WTC11 (cell line): ENCODE measurements at regions of chr11 and their contacts with region 1.

Region 1: GRCh38 chr11:65932558-65932919 is 12.7 kb upstream of the TSGA10IP start:
- DNase-seq: peak; percentile 37
- ATAC-seq: peak; percentile 75
- H3K4me3 Mint-ChIP-seq: peak overlapping the region; percentile 22; the same call in 1 of the 2 replicates
- H3K27ac Mint-ChIP-seq: no peak overlapping the region; the same call in 1 of the 2 replicates
- H3K4me1 Mint-ChIP-seq: peaks cover 21% of the 10 kb centered on the region
- H3K27me3 Mint-ChIP-seq: no peaks in the 10 kb centered on the region
- CTCF ChIP-seq: no peak

Region 2: DNA sequence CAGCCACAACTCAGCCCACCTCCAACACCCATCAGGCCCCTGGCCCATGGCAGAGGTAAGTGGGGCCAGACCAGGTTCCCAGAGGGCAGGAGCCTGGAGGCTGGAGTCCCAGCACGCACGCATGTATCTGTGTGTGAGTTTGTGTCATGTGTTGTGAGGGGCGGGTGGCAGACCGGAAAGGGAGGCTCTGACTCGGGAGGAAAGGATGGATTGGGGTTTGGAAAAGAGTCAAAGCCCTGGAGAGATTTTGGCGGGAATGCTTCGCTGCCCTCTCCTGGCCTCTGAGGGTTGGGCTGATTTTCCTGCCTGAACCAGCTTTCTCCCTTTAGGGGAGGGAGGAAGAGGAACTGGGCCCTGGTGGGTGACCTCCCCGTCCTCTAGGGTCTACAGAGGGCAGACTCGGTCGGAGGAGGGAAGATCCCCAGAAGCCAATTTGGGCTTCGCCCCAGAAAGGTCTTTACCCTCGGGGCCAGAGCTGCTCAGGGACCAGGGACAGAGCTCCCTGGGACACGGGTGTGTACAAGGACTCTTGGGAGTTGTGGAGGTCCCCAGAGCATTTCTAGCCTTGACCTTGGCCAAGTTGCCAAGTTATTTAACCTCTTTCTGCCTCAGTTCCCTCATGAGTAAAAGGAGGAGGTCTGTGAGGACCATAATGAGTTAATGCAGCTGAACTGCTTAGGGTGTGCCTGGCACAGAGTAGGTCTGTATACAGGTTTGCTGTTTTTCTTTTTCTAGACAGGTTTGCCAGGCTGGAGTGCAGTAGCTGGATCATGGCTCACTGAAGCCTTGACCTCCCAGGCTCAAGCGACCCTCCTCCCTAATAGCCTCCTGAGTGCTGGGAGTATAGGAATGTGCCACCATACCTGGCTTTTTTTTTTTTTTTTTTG is 20.6 kb before region 1 on chr11:
- CTCF ChIA-PET with region 1: interaction called, 10 read pairs
- POLR2A ChIA-PET with region 1: no interaction called
- DNase-seq: peak; percentile 69
- ATAC-seq: peak; percentile 81
- H3K4me3 Mint-ChIP-seq: no peak overlapping the region
- H3K27ac Mint-ChIP-seq: no peak overlapping the region
- H3K4me1 Mint-ChIP-seq: peaks cover 17% of the 10 kb centered on the region
- H3K27me3 Mint-ChIP-seq: peaks cover 27% of the 10 kb centered on the region
- CTCF ChIP-seq: no peak

Region 3: DNA sequence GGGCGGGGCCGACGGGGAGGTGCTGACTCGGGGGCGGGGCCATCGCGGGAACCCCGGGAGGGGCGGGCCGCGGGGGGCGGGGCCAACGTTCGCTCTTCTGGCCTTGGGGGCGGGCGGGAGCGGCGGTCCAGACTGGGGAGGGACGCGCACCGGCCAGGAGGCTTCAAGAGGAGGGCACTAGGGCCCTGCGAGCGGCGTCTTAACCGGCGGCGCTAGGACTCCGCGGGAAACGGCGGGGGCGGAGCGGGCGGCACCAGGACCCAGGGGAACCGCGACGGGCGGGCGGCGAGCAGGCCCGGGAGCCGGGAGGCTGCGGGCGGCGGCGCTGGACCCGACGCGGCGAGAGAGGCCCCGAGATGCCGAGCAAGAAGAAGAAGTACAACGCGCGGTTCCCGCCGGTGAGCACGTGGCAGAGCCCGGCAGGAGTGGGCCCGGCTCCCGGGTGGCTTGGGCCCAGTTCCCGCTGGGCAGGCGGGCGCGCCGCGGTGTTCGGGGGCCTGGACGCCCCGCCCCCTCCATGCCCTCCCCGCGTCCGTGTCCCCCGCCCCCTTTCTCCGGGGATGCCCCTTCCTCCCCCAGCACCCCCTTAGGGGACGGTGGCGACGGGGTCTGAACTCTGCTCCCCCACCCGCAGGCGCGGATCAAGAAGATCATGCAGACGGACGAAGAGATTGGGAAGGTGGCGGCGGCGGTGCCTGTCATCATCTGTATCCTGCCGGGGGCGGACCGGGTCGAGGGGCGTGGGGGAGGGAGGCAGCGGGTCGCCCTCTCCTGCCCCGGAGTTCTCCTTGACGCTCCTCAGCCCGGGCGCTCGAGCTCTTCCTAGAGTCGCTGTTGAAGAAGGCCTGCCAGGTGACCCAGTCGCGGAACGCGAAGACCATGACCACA is 13.1 kb before region 1 on chr11 and contains the start of gene DRAP1:
- CTCF ChIA-PET with region 1: interaction called, 10 read pairs
- POLR2A ChIA-PET with region 1: no interaction called
- DNase-seq: peak; percentile 99
- ATAC-seq: peak; percentile 90
- H3K4me3 Mint-ChIP-seq: peak within 1 kb of the TSS; percentile 83
- H3K27ac Mint-ChIP-seq: peak within 1 kb of the TSS; percentile 11
- H3K4me1 Mint-ChIP-seq: peaks cover 18% of the 10 kb centered on the region
- H3K27me3 Mint-ChIP-seq: peaks cover 3% of the 10 kb centered on the region; the same call in 1 of the 2 replicates
- CTCF ChIP-seq: no peak
- total RNA-seq, gene DRAP1: 111 to 129 TPM (median 114 TPM) in 3 replicates

Region 4: GRCh38 chr11:65945430-65945911 is 12.9 kb after region 1 on chr11 and contains the start of gene TSGA10IP:
- CTCF ChIA-PET with region 1: interaction called, 24 read pairs
- POLR2A ChIA-PET with region 1: interaction called, 4 read pairs
- DNase-seq: peak; percentile 84
- ATAC-seq: peak; percentile 92
- H3K4me3 Mint-ChIP-seq: peak within 1 kb of the TSS; percentile 59
- H3K27ac Mint-ChIP-seq: peak within 1 kb of the TSS; percentile 89
- H3K4me1 Mint-ChIP-seq: peaks cover 40% of the 10 kb centered on the region
- H3K27me3 Mint-ChIP-seq: peaks cover 6% of the 10 kb centered on the region; the same call in 1 of the 2 replicates
- CTCF ChIP-seq: no peak
- total RNA-seq, gene TSGA10IP: 3.4 to 4.5 TPM (median 4.1 TPM) in 3 replicates

Region 5: GRCh38 chr11:65958774-65959420 is 26.4 kb after region 1 on chr11:
- CTCF ChIA-PET with region 1: interaction called, 10 read pairs
- POLR2A ChIA-PET with region 1: no interaction called
- DNase-seq: no peak
- ATAC-seq: peak; percentile 4
- H3K4me3 Mint-ChIP-seq: no peak overlapping the region
- H3K27ac Mint-ChIP-seq: peak overlapping the region; percentile 76; the same call in 1 of the 2 replicates
- H3K4me1 Mint-ChIP-seq: peaks cover 21% of the 10 kb centered on the region
- H3K27me3 Mint-ChIP-seq: peaks cover 3% of the 10 kb centered on the region; the same call in 1 of the 2 replicates
- CTCF ChIP-seq: no peak